Activated CD8-positive, alpha-beta memory T cell treated with anti-CD3 and anti-CD28 coated beads, Interleukin-2, amount 10 ng/mL, durations not matched to agents 7 days and 5 days (primary cell): ENCODE measurements at regions of chr7 and their contacts with region 1.

Region 1: GRCh38 chr7:143380255-143380645 is 895 bp upstream of the ZYX start:
- DNase-seq: peak; percentile 93
- ATAC-seq: peak; percentile 52
- H3K4me3 Mint-ChIP-seq: peak overlapping the region; percentile 79
- H3K27ac Mint-ChIP-seq: peak overlapping the region; percentile 94
- H3K4me1 Mint-ChIP-seq: peaks cover 41% of the 10 kb centered on the region
- H3K27me3 Mint-ChIP-seq: no peaks in the 10 kb centered on the region

Region 2: DNA sequence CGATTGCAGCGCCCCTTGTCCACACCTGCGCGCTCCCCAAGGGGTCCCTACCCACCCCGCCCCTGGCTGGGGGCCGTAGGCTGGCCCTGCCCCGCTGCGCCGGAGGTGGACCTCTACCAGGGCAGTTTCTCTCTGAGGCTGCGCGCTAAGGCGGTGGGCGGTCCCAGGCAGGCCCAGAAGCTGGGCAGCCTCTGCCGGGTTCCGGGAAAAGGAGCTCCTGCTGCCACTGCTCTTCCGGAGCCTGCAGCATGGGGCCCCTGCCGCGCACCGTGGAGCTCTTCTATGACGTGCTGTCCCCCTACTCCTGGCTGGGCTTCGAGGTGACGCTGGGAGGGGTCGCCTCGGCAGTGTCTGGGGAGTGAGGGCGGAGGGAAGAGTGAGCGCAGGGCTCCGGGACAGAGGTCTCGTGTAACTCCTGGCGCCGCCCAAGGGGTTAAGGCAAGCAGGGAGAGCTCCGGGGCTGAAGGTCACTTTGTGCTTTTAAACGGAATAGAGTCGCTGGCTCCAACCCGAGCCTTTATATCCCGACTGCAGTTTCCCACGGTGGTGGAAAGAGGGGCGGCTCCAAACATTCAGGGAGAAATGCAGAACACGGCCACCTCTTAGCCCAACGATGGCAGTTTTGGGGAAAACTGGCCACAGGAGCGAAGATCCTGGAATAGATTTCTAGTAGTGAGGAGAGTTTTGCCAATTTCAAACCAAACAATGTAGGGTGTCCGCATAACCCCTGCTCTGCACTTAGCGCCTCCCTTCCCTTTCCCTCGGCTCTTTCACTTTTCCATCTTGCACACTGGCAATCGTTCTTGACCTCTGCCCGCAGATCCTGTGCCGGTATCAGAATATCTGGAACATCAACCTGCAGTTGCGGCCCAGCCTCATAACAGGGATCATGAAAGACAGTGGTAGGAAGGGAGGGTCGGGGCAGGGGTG is 116.7 kb before region 1 on chr7 and contains the start of gene GSTK1:
- CTCF ChIA-PET with region 1: interaction called, 12 read pairs
- DNase-seq: peak; percentile 88
- ATAC-seq: peak; percentile 98
- H3K4me3 Mint-ChIP-seq: peak within 1 kb of the TSS; percentile 99
- H3K27ac Mint-ChIP-seq: peak within 1 kb of the TSS; percentile 93
- H3K4me1 Mint-ChIP-seq: peaks cover 62% of the 10 kb centered on the region
- H3K27me3 Mint-ChIP-seq: no peaks in the 10 kb centered on the region
- total RNA-seq, gene GSTK1: 335 to 436 TPM

Region 3: GRCh38 chr7:143305423-143306070 is 74.7 kb before region 1 on chr7:
- CTCF ChIA-PET with region 1: interaction called, 18 read pairs
- DNase-seq: peak; percentile 77
- ATAC-seq: peak; percentile 70
- H3K4me3 Mint-ChIP-seq: no peak overlapping the region
- H3K27ac Mint-ChIP-seq: peak overlapping the region; percentile 61
- H3K4me1 Mint-ChIP-seq: peaks cover 53% of the 10 kb centered on the region
- H3K27me3 Mint-ChIP-seq: no peaks in the 10 kb centered on the region

Region 4: GRCh38 chr7:143408686-143409561 is 28.7 kb after region 1 on chr7 and contains the start of gene EPHA1:
- CTCF ChIA-PET with region 1: interaction called, 46 read pairs
- DNase-seq: no peak
- ATAC-seq: peak; percentile 64
- H3K4me3 Mint-ChIP-seq: peak within 1 kb of the TSS; percentile 65
- H3K27ac Mint-ChIP-seq: peak within 1 kb of the TSS; percentile 34
- H3K4me1 Mint-ChIP-seq: peaks cover 31% of the 10 kb centered on the region
- H3K27me3 Mint-ChIP-seq: peaks cover 6% of the 10 kb centered on the region
- total RNA-seq, gene EPHA1: 0.47 to 1.6 TPM

Region 5: GRCh38 chr7:143416565-143417149 is 36.4 kb after region 1 on chr7:
- CTCF ChIA-PET with region 1: interaction called, 18 read pairs
- DNase-seq: no peak
- ATAC-seq: peak; percentile 64
- H3K4me3 Mint-ChIP-seq: no peak overlapping the region
- H3K27ac Mint-ChIP-seq: no peak overlapping the region
- H3K4me1 Mint-ChIP-seq: peaks cover 2% of the 10 kb centered on the region
- H3K27me3 Mint-ChIP-seq: peaks cover 7% of the 10 kb centered on the region